ENCODE measurements at regions of chr10 and their contacts with region 1.

Region 1: DNA sequence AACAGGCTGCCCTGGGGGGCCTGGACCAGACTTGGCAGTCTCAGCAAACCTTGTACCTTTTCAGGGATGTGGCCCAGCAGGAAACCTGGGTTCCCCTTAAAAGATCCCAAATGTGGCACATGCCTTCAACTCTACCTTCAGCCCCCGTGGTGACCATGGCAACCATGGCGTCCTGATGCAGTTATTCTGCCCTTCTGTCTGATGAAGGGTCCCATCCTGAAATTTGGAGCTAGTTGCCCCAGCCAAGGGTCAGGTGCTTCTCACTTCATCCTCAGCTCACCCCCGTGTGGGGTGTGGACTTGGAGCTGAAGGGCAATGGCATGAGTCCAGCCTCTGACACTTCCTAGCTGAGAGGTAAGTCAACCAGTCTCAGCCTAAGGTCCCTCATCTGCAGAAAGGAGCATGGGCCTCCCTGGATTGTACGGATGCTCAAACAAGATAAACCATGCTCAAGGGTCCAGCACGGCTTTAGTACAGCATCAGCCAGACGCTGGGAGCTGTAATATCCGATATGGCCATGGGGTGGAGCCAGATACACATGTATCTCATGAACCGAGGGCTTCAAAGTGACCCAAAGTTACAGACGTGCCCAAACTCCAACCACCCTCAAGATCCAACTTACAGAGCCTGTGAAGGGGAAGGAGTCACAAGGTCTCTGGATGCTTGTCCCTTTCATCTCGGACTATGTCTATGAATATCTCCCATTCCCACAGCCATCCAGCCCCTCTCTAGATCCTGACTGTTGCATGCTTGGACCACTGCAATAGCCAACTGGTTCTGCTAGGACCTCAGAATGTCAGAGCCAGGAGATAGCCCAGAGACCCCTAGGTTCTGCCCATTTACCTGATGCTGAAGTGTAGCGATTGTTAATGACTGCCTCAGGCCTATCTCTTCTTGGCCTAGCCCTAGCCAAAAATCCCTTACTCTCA is 142.5 kb downstream of the SH3PXD2A start:
- DNase-seq: peak; percentile 81
- H3K4me3 ChIP-seq: no peak overlapping the region
- H3K27ac ChIP-seq: no peak overlapping the region
- H3K4me1 ChIP-seq: peaks cover 19% of the 10 kb centered on the region
- H3K27me3 ChIP-seq: no peaks in the 10 kb centered on the region

Region 2: DNA sequence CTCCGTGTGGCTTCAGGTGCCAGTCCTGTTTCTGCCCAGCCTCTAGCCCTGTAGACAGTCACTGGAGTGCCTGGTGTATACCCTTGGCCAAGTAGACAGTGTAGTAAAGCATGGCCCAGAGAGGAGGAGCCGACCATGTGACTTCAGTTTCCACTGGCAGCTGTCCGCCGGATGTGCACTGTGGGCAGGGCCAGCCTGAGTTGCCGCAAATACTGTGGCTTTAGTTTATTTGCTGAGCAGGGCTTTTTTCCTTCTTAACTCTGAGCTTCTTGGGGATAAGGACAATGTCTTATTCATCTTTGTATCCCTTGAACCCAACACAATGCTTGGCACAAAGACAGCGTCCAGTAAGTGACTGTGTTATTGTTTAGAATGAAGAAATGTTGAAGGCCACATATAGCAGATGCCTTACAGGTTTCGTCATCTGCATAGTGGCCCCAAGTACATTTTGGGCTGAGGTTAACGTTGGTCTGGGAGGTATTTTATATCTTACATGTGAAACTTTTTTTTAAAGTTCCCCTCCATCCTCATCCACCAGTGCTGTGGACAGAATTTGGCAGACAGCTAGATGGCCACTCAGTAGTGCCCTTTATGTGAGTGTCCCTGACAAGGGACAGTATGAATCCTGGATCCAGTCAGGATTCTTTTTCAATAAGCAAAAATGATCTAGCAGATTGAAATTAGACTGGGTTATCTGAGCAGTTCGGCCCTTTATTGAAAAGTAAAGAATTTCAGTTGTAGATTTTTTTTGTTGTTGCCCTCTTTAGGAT is 916.2 kb before region 1 on chr10:
- in situ Hi-C with region 1: no loop called
- DNase-seq: peak; percentile 74
- H3K4me3 ChIP-seq: no peak overlapping the region
- H3K27ac ChIP-seq: peak overlapping the region; percentile 10; the same call in 1 of the 2 replicates
- H3K4me1 ChIP-seq: peaks cover 18% of the 10 kb centered on the region
- H3K27me3 ChIP-seq: no peaks in the 10 kb centered on the region

Region 3: GRCh38 chr10:103030649-103031048 is 682.2 kb before region 1 on chr10:
- in situ Hi-C with region 1: no loop called
- DNase-seq: no peak
- H3K4me3 ChIP-seq: no peak overlapping the region
- H3K27ac ChIP-seq: no peak overlapping the region
- H3K4me1 ChIP-seq: no peaks in the 10 kb centered on the region
- H3K27me3 ChIP-seq: no peaks in the 10 kb centered on the region

Region 4: DNA sequence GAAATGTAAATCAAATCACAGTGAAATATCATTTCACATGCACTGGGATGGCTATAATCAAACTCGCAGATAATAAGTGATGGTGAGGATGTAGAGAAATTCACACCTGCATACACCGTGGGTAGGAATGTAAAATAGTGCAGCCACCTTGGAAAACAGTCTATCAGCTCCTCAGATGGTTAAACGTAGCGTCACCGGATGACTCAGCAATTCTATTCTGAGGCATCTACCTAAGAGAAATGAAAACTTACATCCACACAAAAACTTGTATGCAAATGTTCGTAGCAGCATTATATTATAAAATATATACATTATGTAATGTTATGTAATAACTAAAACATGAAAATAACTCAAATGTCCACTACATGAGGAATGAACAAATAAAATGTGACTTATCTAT is 103.6 kb after region 1 on chr10:
- in situ Hi-C with region 1: no loop called
- DNase-seq: no peak
- H3K4me3 ChIP-seq: no peak overlapping the region
- H3K27ac ChIP-seq: no peak overlapping the region
- H3K4me1 ChIP-seq: no peaks in the 10 kb centered on the region
- H3K27me3 ChIP-seq: no peaks in the 10 kb centered on the region

Region 5: DNA sequence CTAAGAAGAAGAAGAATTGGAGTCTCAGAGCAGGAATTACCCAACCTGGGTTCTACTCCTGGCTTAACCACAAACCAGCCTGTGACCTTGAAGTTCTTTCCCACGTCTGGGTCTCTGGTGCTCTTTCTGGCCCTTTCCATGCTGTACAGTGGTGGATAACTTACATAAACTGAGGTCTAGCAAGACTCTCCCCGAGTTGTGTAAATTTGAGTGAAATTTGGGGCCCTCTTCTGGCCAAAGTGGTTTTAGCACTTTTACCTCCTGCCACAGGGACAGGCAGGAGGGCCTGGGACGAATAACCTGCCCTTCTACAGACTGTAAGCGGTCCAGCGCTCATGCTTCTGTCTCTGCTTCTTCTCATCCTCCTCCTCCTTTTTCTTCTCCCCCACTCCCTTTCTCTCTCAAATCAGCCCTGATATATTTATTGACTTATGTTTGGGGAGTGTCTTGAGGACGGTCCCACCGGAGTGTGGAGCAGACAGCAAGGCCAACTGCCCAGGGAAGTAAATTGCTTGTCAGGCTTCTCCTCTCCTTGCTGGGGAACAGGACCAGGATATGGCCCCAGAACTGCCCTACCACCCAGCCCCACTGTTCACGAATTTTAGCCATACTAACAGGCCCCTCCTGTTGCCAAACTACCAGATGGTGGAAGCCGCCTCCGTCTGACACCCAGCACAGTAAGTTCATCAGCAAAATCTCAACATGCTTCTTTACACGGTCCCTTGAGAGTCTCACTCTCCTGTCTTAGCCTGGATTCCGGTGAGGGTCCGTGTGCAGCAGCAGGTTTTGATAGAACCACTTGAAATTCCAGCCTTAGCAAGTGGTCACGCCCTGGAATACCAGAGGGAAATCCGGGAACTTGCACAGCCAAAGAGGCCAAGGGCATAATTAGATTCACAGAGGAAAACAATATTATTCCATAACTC is 146.6 kb after region 1 on chr10:
- in situ Hi-C with region 1: loop called (anchors 5 kb)
- DNase-seq: peak; percentile 71
- H3K4me3 ChIP-seq: no peak overlapping the region
- H3K27ac ChIP-seq: no peak overlapping the region
- H3K4me1 ChIP-seq: peaks cover 6% of the 10 kb centered on the region; the same call in 1 of the 2 replicates
- H3K27me3 ChIP-seq: no peaks in the 10 kb centered on the region

Measured in GM23248 (cell line).